ENCODE measurements at regions of chr22 and their contacts with region 1.

Region 1: GRCh38 chr22:45645526-45646414 is 25.9 kb upstream of the ATXN10 start:
- DNase-seq: peak; percentile 35
- ATAC-seq: peak; percentile 100
- H3K4me3 ChIP-seq: no peak overlapping the region
- H3K27ac ChIP-seq: no peak overlapping the region
- H3K4me1 ChIP-seq: peaks cover 2% of the 10 kb centered on the region; the same call in 1 of the 2 replicates
- H3K27me3 ChIP-seq: peaks cover 19% of the 10 kb centered on the region
- CTCF ChIP-seq: peak; percentile 93
- POLR2A ChIP-seq: peak; percentile 56
- RAD21 ChIP-seq: peak; percentile 97

Region 2: GRCh38 chr22:45502215-45503049 is 143.3 kb before region 1 on chr22 and contains the start of gene FBLN1:
- CTCF ChIA-PET with region 1: no interaction called
- POLR2A ChIA-PET with region 1: no interaction called
- dilution Hi-C with region 1: no loop called
- in situ Hi-C with region 1: no loop called
- intact Hi-C with region 1: no loop called
- DNase-seq: no peak
- ATAC-seq: peak; percentile 74
- H3K4me3 ChIP-seq: peak within 1 kb of the TSS; percentile 80
- H3K27ac ChIP-seq: peak within 1 kb of the TSS; percentile 90
- H3K4me1 ChIP-seq: peaks cover 28% of the 10 kb centered on the region
- H3K27me3 ChIP-seq: no peaks in the 10 kb centered on the region
- CTCF ChIP-seq: peak; percentile 21; the same call in 1 of the 2 replicates
- POLR2A ChIP-seq: no peak
- RAD21 ChIP-seq: no peak
- total RNA-seq, gene FBLN1: 11.3 and 11.4 TPM in 2 replicates

Region 3: DNA sequence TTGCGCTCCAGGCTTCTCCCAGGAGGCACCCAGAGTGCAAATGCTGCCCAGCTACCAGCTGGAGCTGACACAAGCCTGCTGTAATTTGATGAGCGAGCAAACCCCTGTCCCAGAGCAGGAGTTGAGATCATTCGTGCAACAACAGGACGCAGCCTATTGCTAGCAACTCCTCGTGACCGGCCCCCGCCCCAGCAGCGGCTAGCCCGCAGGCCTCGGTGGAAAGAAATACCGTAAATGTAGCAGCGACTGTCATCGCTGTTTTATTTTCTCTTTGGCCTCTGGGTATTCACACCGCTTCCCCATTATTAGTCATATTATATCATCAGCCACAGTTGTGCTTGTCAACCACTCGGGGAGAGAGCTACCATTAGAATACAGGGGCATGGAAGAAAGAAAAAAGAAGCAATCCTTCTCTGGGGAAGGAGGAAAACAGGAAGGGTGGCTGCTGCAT is 33.3 kb before region 1 on chr22:
- CTCF ChIA-PET with region 1: no interaction called
- POLR2A ChIA-PET with region 1: no interaction called
- dilution Hi-C with region 1: no loop called
- in situ Hi-C with region 1: no loop called
- intact Hi-C with region 1: no loop called
- DNase-seq: peak; percentile 80
- ATAC-seq: peak; percentile 81
- H3K4me3 ChIP-seq: no peak overlapping the region
- H3K27ac ChIP-seq: no peak overlapping the region; the same call in 1 of the 2 replicates
- H3K4me1 ChIP-seq: peaks cover 8% of the 10 kb centered on the region
- H3K27me3 ChIP-seq: no peaks in the 10 kb centered on the region
- CTCF ChIP-seq: no peak
- POLR2A ChIP-seq: no peak
- RAD21 ChIP-seq: no peak

Region 4: GRCh38 chr22:45709060-45709739 is 63.4 kb after region 1 on chr22:
- CTCF ChIA-PET with region 1: no interaction called
- POLR2A ChIA-PET with region 1: no interaction called
- dilution Hi-C with region 1: no loop called
- in situ Hi-C with region 1: no loop called
- intact Hi-C with region 1: no loop called
- DNase-seq: peak; percentile 79
- ATAC-seq: peak; percentile 88
- H3K4me3 ChIP-seq: no peak overlapping the region
- H3K27ac ChIP-seq: no peak overlapping the region
- H3K4me1 ChIP-seq: peaks cover 17% of the 10 kb centered on the region
- H3K27me3 ChIP-seq: no peaks in the 10 kb centered on the region
- CTCF ChIP-seq: no peak
- POLR2A ChIP-seq: no peak
- RAD21 ChIP-seq: no peak

Region 5: DNA sequence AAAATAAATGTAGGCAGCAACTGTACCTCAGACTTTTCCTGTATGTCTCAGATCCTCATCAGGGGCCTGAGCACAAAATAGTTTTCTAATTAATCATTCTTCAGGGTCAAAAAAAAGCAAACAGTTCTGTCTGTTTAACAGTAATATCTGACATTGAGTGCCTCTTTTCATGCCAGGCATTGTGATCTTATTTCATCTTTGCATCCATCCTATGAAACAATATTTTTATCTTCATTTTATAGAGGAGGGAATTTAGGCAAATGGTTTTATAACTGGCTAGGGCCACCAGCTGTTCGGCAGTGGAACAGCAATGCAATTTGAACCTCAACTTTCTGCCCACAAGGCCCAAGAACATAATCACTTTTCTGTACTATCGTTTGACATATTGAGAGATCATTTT is 185.6 kb after region 1 on chr22:
- CTCF ChIA-PET with region 1: interaction called, 3 read pairs
- POLR2A ChIA-PET with region 1: no interaction called
- dilution Hi-C with region 1: no loop called
- in situ Hi-C with region 1: no loop called
- intact Hi-C with region 1: loop called (anchors 1 kb)
- DNase-seq: peak; percentile 38
- ATAC-seq: peak; percentile 61
- H3K4me3 ChIP-seq: no peak overlapping the region
- H3K27ac ChIP-seq: no peak overlapping the region
- H3K4me1 ChIP-seq: peaks cover 6% of the 10 kb centered on the region; the same call in 1 of the 2 replicates
- H3K27me3 ChIP-seq: no peaks in the 10 kb centered on the region
- CTCF ChIP-seq: peak; percentile 63
- POLR2A ChIP-seq: no peak
- RAD21 ChIP-seq: peak; percentile 59

Region 6: DNA sequence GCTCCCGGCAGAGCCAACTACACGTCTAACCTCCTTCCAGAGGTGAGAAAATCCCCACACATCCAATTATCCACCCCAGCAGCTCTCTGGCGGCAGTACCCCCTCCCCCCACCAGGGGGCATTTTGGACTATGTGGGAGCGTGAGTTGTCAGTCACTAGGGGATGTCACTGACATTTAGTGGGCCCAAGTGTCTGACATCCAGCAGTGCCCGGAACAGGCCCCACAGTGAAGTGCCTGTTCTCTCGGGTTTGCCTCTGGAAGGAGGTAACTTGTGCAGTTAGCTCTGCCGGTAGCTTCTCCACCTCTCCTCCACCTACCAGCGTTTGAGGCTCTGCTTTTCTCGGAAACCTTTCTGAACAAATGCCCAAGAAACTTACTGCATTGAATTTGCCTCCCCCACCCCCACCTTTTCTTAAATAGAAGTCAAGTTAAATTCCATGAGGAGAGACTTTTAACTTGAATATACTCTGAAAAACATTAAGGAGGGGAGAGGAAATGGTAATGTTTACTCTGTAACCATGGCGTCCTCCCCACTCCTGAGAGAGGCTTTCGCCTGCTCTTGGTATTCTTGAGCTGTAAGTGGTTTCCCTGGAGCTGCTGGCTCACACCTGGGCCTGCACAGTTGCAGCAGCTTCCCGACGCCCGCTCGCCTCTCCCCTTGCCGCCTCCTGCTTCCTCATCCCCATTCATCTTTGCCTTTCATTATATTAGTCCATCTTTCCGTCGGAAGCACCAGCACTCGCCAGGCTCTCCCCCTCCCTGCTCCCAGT is 218.4 kb after region 1 on chr22:
- CTCF ChIA-PET with region 1: interaction called, 3 read pairs
- POLR2A ChIA-PET with region 1: no interaction called
- dilution Hi-C with region 1: no loop called
- in situ Hi-C with region 1: loop called (anchors 10 kb)
- intact Hi-C with region 1: loop called (anchors 2 kb)
- DNase-seq: peak; percentile 63
- ATAC-seq: peak; percentile 62
- H3K4me3 ChIP-seq: no peak overlapping the region
- H3K27ac ChIP-seq: no peak overlapping the region
- H3K4me1 ChIP-seq: no peaks in the 10 kb centered on the region; the same call in 1 of the 2 replicates
- H3K27me3 ChIP-seq: peaks cover 32% of the 10 kb centered on the region
- CTCF ChIP-seq: peak; percentile 76
- POLR2A ChIP-seq: no peak
- RAD21 ChIP-seq: peak; percentile 63